HepG2 (cell line): ENCODE measurements at regions of chr2 and their contacts with region 1.

Region 1: GRCh38 chr2:55771612-55772011 is 78.0 kb upstream of the PNPT1 start:
- DNase-seq: peak; percentile 22
- ATAC-seq: no peak
- H3K4me3 ChIP-seq: no peak overlapping the region
- H3K27ac ChIP-seq: no peak overlapping the region
- H3K4me1 ChIP-seq: no peaks in the 10 kb centered on the region
- H3K27me3 ChIP-seq: no peaks in the 10 kb centered on the region
- CTCF ChIP-seq: peak; percentile 40
- EP300 ChIP-seq: no peak
- POLR2A ChIP-seq: no peak
- RAD21 ChIP-seq: peak; percentile 50

Region 2: DNA sequence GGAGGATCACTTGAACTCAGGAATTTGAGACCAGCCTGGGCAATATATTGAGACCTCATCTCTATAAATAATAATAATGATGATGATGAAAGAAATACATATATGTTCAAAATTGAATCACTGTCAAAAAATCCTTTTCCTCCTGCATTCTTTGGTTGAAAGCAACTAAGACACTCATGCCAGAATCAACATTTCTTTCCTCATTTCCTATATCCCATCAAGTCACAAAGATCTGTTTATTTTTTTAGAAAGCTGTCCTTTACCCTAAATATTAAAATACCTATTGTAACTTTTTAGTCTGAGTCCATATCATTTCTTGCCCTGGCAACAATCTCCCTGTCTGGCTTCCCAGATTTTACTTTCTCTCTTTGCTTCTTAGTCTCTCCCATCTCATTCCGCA is 122.4 kb before region 1 on chr2:
- CTCF ChIA-PET with region 1: no interaction called
- POLR2A ChIA-PET with region 1: no interaction called
- in situ Hi-C with region 1: no loop called
- intact Hi-C with region 1: no loop called
- DNase-seq: no peak
- ATAC-seq: no peak
- H3K4me3 ChIP-seq: no peak overlapping the region
- H3K27ac ChIP-seq: no peak overlapping the region
- H3K4me1 ChIP-seq: peaks cover 6% of the 10 kb centered on the region; the same call in 1 of the 2 replicates
- H3K27me3 ChIP-seq: no peaks in the 10 kb centered on the region
- CTCF ChIP-seq: no peak
- EP300 ChIP-seq: no peak
- POLR2A ChIP-seq: no peak
- RAD21 ChIP-seq: no peak

Region 3: GRCh38 chr2:55961318-55961911 is 189.8 kb after region 1 on chr2:
- CTCF ChIA-PET with region 1: interaction called, 38 read pairs
- POLR2A ChIA-PET with region 1: no interaction called
- in situ Hi-C with region 1: loop called (anchors 5 kb)
- intact Hi-C with region 1: loop called (anchors 1 kb)
- DNase-seq: peak; percentile 44
- ATAC-seq: peak; percentile 76
- H3K4me3 ChIP-seq: no peak overlapping the region
- H3K27ac ChIP-seq: no peak overlapping the region
- H3K4me1 ChIP-seq: no peaks in the 10 kb centered on the region
- H3K27me3 ChIP-seq: no peaks in the 10 kb centered on the region; a peak in 1 of 5 replicates
- CTCF ChIP-seq: peak; percentile 68
- EP300 ChIP-seq: no peak
- POLR2A ChIP-seq: no peak
- RAD21 ChIP-seq: 0 out of 2 replicates have a peak, but pooled peaks have one; percentile 38

Region 4: GRCh38 chr2:56009758-56010458 is 238.3 kb after region 1 on chr2:
- CTCF ChIA-PET with region 1: interaction called, 12 read pairs
- POLR2A ChIA-PET with region 1: no interaction called
- in situ Hi-C with region 1: no loop called
- intact Hi-C with region 1: loop called (anchors 1 kb)
- DNase-seq: peak; percentile 42
- ATAC-seq: no peak
- H3K4me3 ChIP-seq: no peak overlapping the region
- H3K27ac ChIP-seq: no peak overlapping the region
- H3K4me1 ChIP-seq: no peaks in the 10 kb centered on the region
- H3K27me3 ChIP-seq: 0 out of 5 replicates have a peak, but pooled peaks cover 0 to 5% of the 10 kb centered on the region in 2 experiments
- CTCF ChIP-seq: peak; percentile 63
- EP300 ChIP-seq: no peak
- POLR2A ChIP-seq: no peak
- RAD21 ChIP-seq: no peak